Naive thymus-derived CD4-positive, alpha-beta T cell (primary cell): ENCODE measurements at regions of chr7 and their contacts with region 1.

Region 1: DNA sequence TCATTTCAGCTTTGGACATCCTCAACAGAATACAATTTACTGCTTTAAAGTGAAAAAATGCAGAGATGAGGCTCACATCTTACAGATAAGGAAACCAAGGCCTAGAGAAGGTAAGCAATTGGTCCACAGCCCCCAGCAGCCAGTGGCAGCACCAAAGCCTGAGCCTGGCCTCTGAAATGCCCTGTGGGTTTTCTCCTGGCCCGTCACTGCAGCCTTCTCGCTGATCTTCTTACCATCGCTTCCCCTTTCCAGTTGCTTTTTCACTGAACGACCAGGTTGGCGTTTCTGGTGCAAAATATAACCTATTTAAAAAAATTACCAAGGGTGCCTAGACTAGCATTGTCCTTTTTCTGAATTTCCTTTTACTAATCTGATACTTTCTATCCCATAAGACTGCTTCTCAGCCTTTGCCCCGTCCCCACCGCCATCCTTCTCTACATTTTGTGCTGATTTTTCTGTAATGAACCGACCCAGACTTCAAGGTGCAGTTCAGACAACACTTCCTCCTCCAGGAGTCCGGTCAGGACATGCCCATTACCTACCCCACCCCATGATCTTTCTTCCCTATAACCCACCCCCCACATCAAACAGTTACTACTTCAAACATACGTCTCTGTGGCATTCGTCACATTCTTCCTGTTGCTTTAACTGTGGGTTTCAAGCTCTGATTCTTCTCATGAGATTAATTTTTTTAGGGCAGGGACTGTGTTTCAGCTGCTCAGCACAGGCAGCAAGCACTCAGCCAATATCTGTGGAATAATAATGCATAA is 289.4 kb downstream of the DNAJB6 start:
- DNase-seq: peak in 7 of 9 donors; percentile 54 to 83 (median 80)
- ATAC-seq: peak; percentile 79
- H3K4me3 ChIP-seq: peak overlapping the region; percentile 18
- H3K4me3 Mint-ChIP-seq: peak overlapping the region; percentile 69 to 84 (median 76)
- H3K27ac ChIP-seq: no peak overlapping the region
- H3K27ac Mint-ChIP-seq: peak overlapping the region; percentile 28 to 96 (median 89)
- H3K4me1 ChIP-seq: peaks cover 15 to 71% of the 10 kb centered on the region in 2 donors
- H3K4me1 Mint-ChIP-seq: peaks cover 41 to 81% (median 77%) of the 10 kb centered on the region in 7 donors
- H3K27me3 ChIP-seq: no peaks in the 10 kb centered on the region
- H3K27me3 Mint-ChIP-seq: peaks cover 0 to 48% (median 4%) of the 10 kb centered on the region in 5 donors

Region 2: DNA sequence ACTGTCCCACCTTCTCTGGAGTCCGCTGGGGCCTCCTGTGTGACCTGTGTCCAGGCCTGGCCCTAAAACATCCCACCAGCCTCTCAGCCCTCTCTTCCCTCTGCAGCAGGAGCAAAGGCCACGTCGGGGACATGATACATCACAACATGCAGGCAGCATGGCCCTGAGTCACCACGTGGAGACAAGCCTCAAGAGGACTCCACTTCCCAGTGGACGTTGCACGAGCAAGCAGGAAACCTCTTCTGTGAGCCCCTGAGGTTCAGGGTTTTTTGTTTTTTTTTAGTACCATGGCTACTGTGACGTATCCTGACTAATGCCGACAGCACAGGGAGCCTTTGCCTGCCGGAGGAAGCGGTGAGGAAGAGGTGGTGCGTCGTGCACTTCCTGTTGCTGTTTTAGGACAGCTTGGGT is 123.5 kb before region 1 on chr7:
- CTCF ChIA-PET with region 1: no interaction called
- POLR2A ChIA-PET with region 1: no interaction called
- intact Hi-C with region 1: loop called in 1 of 2 experiments (anchors 2 kb)
- DNase-seq: peak; percentile 33 to 94 (median 92)
- ATAC-seq: peak; percentile 98
- H3K4me3 ChIP-seq: peak overlapping the region; percentile 26
- H3K4me3 Mint-ChIP-seq: peak overlapping the region; percentile 77 to 93 (median 87)
- H3K27ac ChIP-seq: peak overlapping the region; percentile 68
- H3K27ac Mint-ChIP-seq: peak overlapping the region; percentile 86 to 100 (median 96)
- H3K4me1 ChIP-seq: peaks cover 20 to 22% of the 10 kb centered on the region in 2 donors
- H3K4me1 Mint-ChIP-seq: peaks cover 20 to 37% (median 34%) of the 10 kb centered on the region in 7 donors
- H3K27me3 ChIP-seq: no peaks in the 10 kb centered on the region
- H3K27me3 Mint-ChIP-seq: peaks cover 0 to 22% (median 7%) of the 10 kb centered on the region in 5 donors

Region 3: GRCh38 chr7:157576440-157576886 is 49.7 kb before region 1 on chr7:
- CTCF ChIA-PET with region 1: no interaction called
- POLR2A ChIA-PET with region 1: interaction called, 6 read pairs
- intact Hi-C with region 1: loop called in 1 of 2 experiments (anchors 2 kb)
- DNase-seq: peak; percentile 29 to 76 (median 71)
- ATAC-seq: peak; percentile 87
- H3K4me3 ChIP-seq: peak overlapping the region; percentile 52
- H3K4me3 Mint-ChIP-seq: peak overlapping the region; percentile 73 to 88 (median 80)
- H3K27ac ChIP-seq: peak overlapping the region; percentile 69
- H3K27ac Mint-ChIP-seq: peak overlapping the region; percentile 86 to 98 (median 93)
- H3K4me1 ChIP-seq: peaks cover 5 to 12% of the 10 kb centered on the region in 2 donors
- H3K4me1 Mint-ChIP-seq: peaks cover 0 to 27% (median 19%) of the 10 kb centered on the region in 7 donors
- H3K27me3 ChIP-seq: no peaks in the 10 kb centered on the region
- H3K27me3 Mint-ChIP-seq: peaks cover 0 to 7% (median 0%) of the 10 kb centered on the region in 5 donors

Region 4: DNA sequence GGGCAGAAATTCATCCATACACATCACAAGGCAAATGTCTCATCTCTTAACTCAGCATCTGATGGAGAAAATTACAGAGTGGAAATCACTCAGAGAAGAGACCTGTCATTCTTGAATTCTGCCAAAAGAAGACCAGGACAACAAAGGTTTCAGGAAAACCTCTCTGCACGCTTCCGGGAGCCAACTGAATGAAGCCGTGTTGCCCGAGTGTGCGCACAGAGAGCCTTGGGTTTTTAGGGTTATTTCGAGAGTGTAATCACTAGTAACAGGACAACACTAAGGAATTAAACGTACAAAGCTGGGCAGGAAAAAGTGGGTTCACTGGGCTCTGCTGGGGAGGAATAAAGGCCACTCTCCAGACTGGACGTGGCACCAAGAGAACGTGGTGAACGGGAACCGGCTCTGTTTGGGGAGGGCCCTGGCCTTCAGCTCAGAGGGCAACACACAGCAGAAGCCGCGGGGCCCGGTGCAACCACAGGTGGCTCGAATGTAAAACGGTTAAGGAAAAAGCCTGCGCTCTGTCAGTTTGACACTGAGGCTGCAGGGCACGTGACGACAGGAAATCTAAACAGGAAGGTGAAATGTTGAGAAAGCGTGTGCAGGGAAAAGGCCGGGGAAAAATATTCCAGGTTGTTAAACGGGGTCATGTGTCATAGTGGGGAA is 42.2 kb after region 1 on chr7:
- CTCF ChIA-PET with region 1: interaction called, 4 read pairs
- POLR2A ChIA-PET with region 1: interaction called, 4 read pairs
- intact Hi-C with region 1: loop called in 1 of 2 experiments (anchors 5 kb)
- DNase-seq: peak in 1 of 9 donors; percentile 31
- ATAC-seq: no peak
- H3K4me3 ChIP-seq: no peak overlapping the region
- H3K4me3 Mint-ChIP-seq: peak overlapping the region in 9 of 10 donors; percentile 35 to 79 (median 60)
- H3K27ac ChIP-seq: no peak overlapping the region
- H3K27ac Mint-ChIP-seq: peak overlapping the region in 7 of 9 donors; percentile 22 to 76 (median 46)
- H3K4me1 ChIP-seq: peaks cover 0 to 27% of the 10 kb centered on the region in 2 donors
- H3K4me1 Mint-ChIP-seq: peaks cover 6 to 36% (median 27%) of the 10 kb centered on the region in 7 donors
- H3K27me3 ChIP-seq: no peaks in the 10 kb centered on the region
- H3K27me3 Mint-ChIP-seq: peaks cover 0 to 36% (median 10%) of the 10 kb centered on the region in 5 donors

Region 5: DNA sequence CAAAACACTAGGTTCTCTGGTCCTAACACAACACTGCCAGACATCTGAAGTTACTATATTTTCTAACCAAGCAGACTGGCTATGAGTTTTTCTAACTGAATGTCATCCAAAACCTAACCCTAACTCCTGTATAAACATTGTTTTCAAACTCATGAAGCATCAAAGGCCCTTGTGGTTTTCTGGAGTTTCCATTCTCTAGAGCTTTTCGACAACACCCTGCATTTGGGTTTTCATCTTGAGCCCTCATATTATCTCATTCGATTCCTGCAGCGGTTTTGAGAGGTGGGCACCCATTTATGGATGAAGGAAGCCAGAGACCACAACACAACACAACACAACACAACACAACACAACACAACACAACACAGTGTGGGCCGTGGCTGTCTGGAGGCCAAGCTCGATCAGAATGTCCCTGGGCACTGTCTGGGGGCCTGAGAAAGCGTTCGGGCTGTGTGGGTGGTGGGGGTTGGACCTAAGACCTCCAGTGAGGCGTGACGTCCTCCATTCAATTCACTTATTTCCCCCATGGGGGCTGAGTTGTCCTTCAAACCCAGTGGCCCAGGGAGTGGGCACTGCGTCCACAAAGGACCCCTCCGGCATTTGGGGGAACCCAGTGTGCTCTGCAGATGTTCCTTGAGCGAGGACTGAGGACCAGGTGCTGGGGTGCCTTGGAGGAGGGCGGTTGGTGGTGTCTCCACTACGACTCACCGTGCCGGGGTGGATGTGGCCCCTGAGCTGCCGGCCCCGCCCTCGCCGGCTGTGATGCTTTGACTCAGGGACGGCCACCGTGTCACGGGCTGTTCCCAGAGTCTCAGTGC is 201.1 kb after region 1 on chr7:
- CTCF ChIA-PET with region 1: no interaction called
- POLR2A ChIA-PET with region 1: no interaction called
- intact Hi-C with region 1: loop called in 1 of 2 experiments (anchors 1 kb)
- DNase-seq: peak in 7 of 9 donors; percentile 53 to 79 (median 67)
- ATAC-seq: peak; percentile 74
- H3K4me3 ChIP-seq: peak overlapping the region; percentile 37
- H3K4me3 Mint-ChIP-seq: peak overlapping the region; percentile 45 to 83 (median 78)
- H3K27ac ChIP-seq: peak overlapping the region; percentile 40
- H3K27ac Mint-ChIP-seq: peak overlapping the region; percentile 66 to 96 (median 89)
- H3K4me1 ChIP-seq: peaks cover 0 to 47% of the 10 kb centered on the region in 2 donors
- H3K4me1 Mint-ChIP-seq: peaks cover 9 to 58% (median 45%) of the 10 kb centered on the region in 7 donors
- H3K27me3 ChIP-seq: no peaks in the 10 kb centered on the region
- H3K27me3 Mint-ChIP-seq: no peaks in the 10 kb centered on the region